Endothelial cell of umbilical vein (primary cell): ENCODE measurements at regions of chr4 and their contacts with region 1.

Region 1: GRCh38 chr4:176735300-176735699 is 57.4 kb downstream of the VEGFC start:
- DNase-seq: peak; percentile 58
- H3K4me3 ChIP-seq: no peak overlapping the region
- H3K27ac ChIP-seq: no peak overlapping the region
- H3K4me1 ChIP-seq: peaks cover 6% of the 10 kb centered on the region
- H3K27me3 ChIP-seq: no peaks in the 10 kb centered on the region
- CTCF ChIP-seq: no peak
- POLR2A ChIP-seq: no peak

Region 2: GRCh38 chr4:176769519-176769918 is 34.2 kb after region 1 on chr4:
- CTCF ChIA-PET with region 1: no interaction called
- POLR2A ChIA-PET with region 1: interaction called, 3 read pairs
- dilution Hi-C with region 1: no loop called
- intact Hi-C with region 1: loop called (anchors 2 kb)
- DNase-seq: peak; percentile 77
- H3K4me3 ChIP-seq: no peak overlapping the region
- H3K27ac ChIP-seq: peak overlapping the region; percentile 73
- H3K4me1 ChIP-seq: peaks cover 14% of the 10 kb centered on the region
- H3K27me3 ChIP-seq: no peaks in the 10 kb centered on the region
- CTCF ChIP-seq: no peak
- POLR2A ChIP-seq: no peak